ENCODE measurements at regions of chr16 and their contacts with region 1.

Region 1: GRCh38 chr16:15949210-15950160 is at the start of gene ABCC1:
- DNase-seq: peak; percentile 31 to 88 (median 48)
- ATAC-seq: peak; percentile 69
- H3K4me3 ChIP-seq: peak within 1 kb of the TSS; percentile 88
- H3K4me3 Mint-ChIP-seq: peak within 1 kb of the TSS; percentile 98
- H3K27ac ChIP-seq: peak within 1 kb of the TSS; percentile 48 to 86
- H3K27ac Mint-ChIP-seq: peak within 1 kb of the TSS; percentile 94
- H3K4me1 ChIP-seq: peaks cover 52% of the 10 kb centered on the region
- H3K4me1 Mint-ChIP-seq: peaks cover 40% of the 10 kb centered on the region
- H3K27me3 ChIP-seq: no peaks in the 10 kb centered on the region
- H3K27me3 Mint-ChIP-seq: no peaks in the 10 kb centered on the region
- CTCF ChIP-seq: peak; percentile 22
- total RNA-seq, gene ABCC1: 42.9 to 44.8 TPM

Region 2: DNA sequence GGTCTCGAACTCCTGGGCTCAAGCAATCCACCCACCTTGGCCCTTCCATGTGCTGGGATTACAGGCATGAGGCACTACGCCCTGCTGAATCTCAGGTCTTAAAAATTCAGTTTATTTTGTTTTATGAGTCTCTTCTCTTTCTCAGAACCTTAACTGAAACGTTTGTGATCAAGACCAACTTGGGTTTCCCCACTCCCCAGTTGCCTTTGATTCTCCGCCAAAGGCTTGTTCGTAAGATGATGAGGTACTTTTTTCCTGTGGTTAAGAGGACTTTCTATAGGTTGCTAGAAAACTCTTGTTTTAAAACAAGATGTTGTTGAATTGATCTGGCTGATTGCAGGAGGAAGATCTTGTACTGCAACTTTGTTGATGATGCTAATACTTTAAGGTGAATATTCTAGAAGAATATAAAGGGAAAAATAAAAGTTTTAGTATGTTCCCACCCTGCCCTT is 11.6 kb after region 1 on chr16:
- CTCF ChIA-PET with region 1: no interaction called
- POLR2A ChIA-PET with region 1: interaction called, 17 read pairs
- intact Hi-C with region 1: loop called (anchors 1 kb)
- DNase-seq: peak; percentile 46 to 95 (median 60)
- ATAC-seq: peak; percentile 84
- H3K4me3 ChIP-seq: peak overlapping the region; percentile 49
- H3K4me3 Mint-ChIP-seq: peak overlapping the region; percentile 73
- H3K27ac ChIP-seq: peak overlapping the region; percentile 86 to 91
- H3K27ac Mint-ChIP-seq: peak overlapping the region; percentile 89
- H3K4me1 ChIP-seq: peaks cover 79% of the 10 kb centered on the region
- H3K4me1 Mint-ChIP-seq: peaks cover 73% of the 10 kb centered on the region
- H3K27me3 ChIP-seq: no peaks in the 10 kb centered on the region
- H3K27me3 Mint-ChIP-seq: no peaks in the 10 kb centered on the region
- CTCF ChIP-seq: no peak

Region 3: GRCh38 chr16:16004314-16004749 is 54.8 kb after region 1 on chr16:
- CTCF ChIA-PET with region 1: no interaction called
- POLR2A ChIA-PET with region 1: no interaction called
- intact Hi-C with region 1: loop called in 1 of 2 experiments (anchors 5 kb)
- DNase-seq: no peak
- ATAC-seq: no peak
- H3K4me3 ChIP-seq: no peak overlapping the region
- H3K4me3 Mint-ChIP-seq: no peak overlapping the region
- H3K27ac ChIP-seq: no peak overlapping the region
- H3K27ac Mint-ChIP-seq: no peak overlapping the region
- H3K4me1 ChIP-seq: peaks cover 9% of the 10 kb centered on the region
- H3K4me1 Mint-ChIP-seq: peaks cover 39% of the 10 kb centered on the region
- H3K27me3 ChIP-seq: no peaks in the 10 kb centered on the region
- H3K27me3 Mint-ChIP-seq: no peaks in the 10 kb centered on the region
- CTCF ChIP-seq: no peak

Region 4: GRCh38 chr16:16033208-16033717 is 83.8 kb after region 1 on chr16:
- CTCF ChIA-PET with region 1: interaction called, 4 read pairs
- POLR2A ChIA-PET with region 1: interaction called, 6 read pairs
- intact Hi-C with region 1: loop called in 1 of 2 experiments (anchors 2 kb)
- DNase-seq: peak in 6 of 14 experiments; percentile 3 to 82 (median 48)
- ATAC-seq: peak; percentile 93
- H3K4me3 ChIP-seq: peak overlapping the region; percentile 1
- H3K4me3 Mint-ChIP-seq: peak overlapping the region; percentile 40
- H3K27ac ChIP-seq: peak overlapping the region in 1 of 2 donors; percentile 41
- H3K27ac Mint-ChIP-seq: peak overlapping the region; percentile 87
- H3K4me1 ChIP-seq: peaks cover 20% of the 10 kb centered on the region
- H3K4me1 Mint-ChIP-seq: peaks cover 23% of the 10 kb centered on the region
- H3K27me3 ChIP-seq: no peaks in the 10 kb centered on the region
- H3K27me3 Mint-ChIP-seq: no peaks in the 10 kb centered on the region
- CTCF ChIP-seq: no peak